ENCODE measurements at regions of chr10 and their contacts with region 1.

Region 1: GRCh38 chr10:73879296-73880173 is 5.2 kb upstream of the CAMK2G start:
- DNase-seq: peak; percentile 94
- ATAC-seq: peak; percentile 94
- H3K4me3 ChIP-seq: no peak overlapping the region
- H3K27ac ChIP-seq: no peak overlapping the region
- H3K4me1 ChIP-seq: peaks cover 29% of the 10 kb centered on the region
- H3K27me3 ChIP-seq: no peaks in the 10 kb centered on the region
- CTCF ChIP-seq: peak; percentile 97

Region 2: GRCh38 chr10:73931767-73932619 is 52.5 kb after region 1 on chr10:
- intact Hi-C with region 1: loop called (anchors 10 kb)
- DNase-seq: peak; percentile 56
- ATAC-seq: peak; percentile 86 to 92
- H3K4me3 ChIP-seq: no peak overlapping the region
- H3K27ac ChIP-seq: no peak overlapping the region
- H3K4me1 ChIP-seq: peaks cover 11% of the 10 kb centered on the region
- H3K27me3 ChIP-seq: no peaks in the 10 kb centered on the region
- CTCF ChIP-seq: no peak

Region 3: GRCh38 chr10:74026428-74027015 is 147.0 kb after region 1 on chr10:
- intact Hi-C with region 1: no loop called
- DNase-seq: no peak
- ATAC-seq: no peak
- H3K4me3 ChIP-seq: no peak overlapping the region
- H3K27ac ChIP-seq: no peak overlapping the region
- H3K4me1 ChIP-seq: peaks cover 51% of the 10 kb centered on the region
- H3K27me3 ChIP-seq: no peaks in the 10 kb centered on the region
- CTCF ChIP-seq: no peak

Region 4: DNA sequence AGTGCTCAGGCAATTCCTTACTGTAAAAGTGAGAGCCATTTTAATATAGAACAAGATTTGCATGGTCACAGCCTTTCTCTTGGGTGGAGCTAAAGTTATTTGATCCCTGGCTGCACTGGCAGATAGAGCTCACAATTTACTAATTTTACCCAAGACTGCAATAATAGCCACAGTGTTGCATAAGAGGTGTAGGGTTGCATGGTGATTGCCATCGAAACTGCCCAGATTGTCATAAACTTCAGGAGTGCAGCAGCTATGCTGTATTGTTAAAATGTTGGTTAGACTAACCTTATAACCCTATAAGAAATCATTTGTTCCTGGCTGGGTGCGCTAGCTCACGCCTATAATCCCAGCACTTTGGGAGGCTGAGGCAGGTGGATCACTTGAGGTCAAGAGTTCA is 168.3 kb after region 1 on chr10:
- intact Hi-C with region 1: no loop called
- DNase-seq: no peak
- ATAC-seq: peak; percentile 63 to 65
- H3K4me3 ChIP-seq: no peak overlapping the region
- H3K27ac ChIP-seq: peak overlapping the region; percentile 61
- H3K4me1 ChIP-seq: peaks cover 45% of the 10 kb centered on the region
- H3K27me3 ChIP-seq: no peaks in the 10 kb centered on the region
- CTCF ChIP-seq: no peak

Region 5: DNA sequence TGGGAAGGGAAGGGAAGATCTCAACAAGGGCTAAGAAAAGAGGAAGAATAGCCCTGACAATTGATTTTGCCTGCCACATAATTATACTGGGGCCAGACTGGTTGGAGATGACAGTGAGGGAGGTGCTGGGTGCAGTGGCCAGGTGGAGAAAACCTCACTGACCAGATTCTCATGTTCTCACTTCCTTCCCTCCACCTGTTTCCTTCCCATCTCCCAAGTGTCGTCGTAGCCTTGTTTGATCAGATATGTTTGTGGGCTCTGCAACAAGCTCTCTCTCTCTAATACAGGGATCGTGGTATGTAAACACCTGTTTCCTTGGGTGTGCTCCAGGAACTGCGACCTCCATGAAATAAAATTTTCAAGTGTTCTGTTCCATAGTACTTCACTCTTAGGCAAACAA is 178.5 kb after region 1 on chr10:
- intact Hi-C with region 1: no loop called
- DNase-seq: no peak
- ATAC-seq: peak; percentile 15 to 25
- H3K4me3 ChIP-seq: no peak overlapping the region
- H3K27ac ChIP-seq: peak overlapping the region; percentile 9
- H3K4me1 ChIP-seq: peaks cover 54% of the 10 kb centered on the region
- H3K27me3 ChIP-seq: no peaks in the 10 kb centered on the region
- CTCF ChIP-seq: no peak

Region 6: DNA sequence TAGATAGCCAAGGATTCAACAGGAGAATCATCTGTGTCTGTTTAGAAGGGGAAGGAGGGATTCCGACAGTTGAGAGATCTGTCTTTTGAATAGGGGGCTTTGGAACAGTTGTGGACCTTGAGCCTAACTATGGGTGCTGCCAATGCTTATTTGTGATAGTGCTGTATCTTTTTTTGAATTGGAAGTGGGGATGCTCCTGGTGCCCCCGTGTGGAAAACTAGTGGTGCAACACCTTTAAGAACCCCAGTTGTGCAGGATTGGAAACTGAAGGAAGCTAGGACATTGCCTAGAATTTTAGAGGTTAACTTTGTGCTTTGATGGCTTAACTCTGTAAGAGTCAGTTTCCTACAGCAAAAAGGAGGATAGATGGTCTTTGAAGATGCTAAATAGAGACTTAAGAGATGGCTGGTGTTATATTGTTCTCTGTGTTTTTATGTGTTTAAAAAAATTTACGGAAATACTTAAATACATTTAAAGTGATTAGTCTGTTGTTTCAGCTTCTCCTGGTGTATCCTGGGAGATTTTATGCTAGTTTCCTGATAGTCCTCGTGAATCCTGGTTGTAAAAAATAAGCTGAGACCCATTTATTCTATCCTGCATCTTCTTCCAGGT is 201.8 kb after region 1 on chr10:
- intact Hi-C with region 1: loop called (anchors 10 kb)
- DNase-seq: no peak
- ATAC-seq: peak; percentile 64 to 83
- H3K4me3 ChIP-seq: no peak overlapping the region
- H3K27ac ChIP-seq: no peak overlapping the region
- H3K4me1 ChIP-seq: peaks cover 14% of the 10 kb centered on the region
- H3K27me3 ChIP-seq: no peaks in the 10 kb centered on the region
- CTCF ChIP-seq: peak; percentile 75